Right ventricle myocardium superior (tissue), 1 donor: ENCODE measurements at regions of chr5 and their contacts with region 1.

Region 1: GRCh38 chr5:147509710-147510651 is at the start of gene DPYSL3:
- DNase-seq: peak; percentile 84
- ATAC-seq: peak; percentile 98
- total RNA-seq, gene DPYSL3: 20.5 TPM

Region 2: DNA sequence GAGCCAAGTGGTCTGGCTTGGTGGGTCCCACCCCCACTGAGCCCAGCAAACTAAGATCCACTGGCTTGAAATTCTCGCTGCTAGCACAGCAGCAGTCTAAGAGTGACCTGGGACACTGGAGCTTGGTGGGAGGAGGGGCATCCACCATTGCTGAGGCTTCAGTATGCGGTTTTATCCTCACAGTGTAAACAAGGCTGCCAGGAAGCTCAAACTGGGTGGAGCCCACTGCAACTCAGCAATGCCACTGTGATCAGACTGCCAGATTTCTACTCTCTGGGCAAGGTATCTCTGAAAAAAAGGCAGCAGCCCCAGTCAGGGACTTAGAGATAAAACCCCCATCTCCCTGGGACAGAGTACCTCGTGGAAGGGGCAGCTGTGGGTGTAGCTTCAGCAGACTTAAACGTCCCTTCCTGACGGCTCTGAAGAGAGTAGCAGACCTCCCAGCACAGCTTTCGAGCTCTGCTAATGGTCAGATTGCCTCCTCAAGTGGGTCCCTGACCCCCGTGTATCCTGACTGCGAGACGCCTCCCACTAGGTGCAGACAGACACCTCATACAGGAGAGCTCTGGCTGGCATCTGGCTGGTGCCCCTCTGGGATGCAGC is 293.3 kb before region 1 on chr5:
- intact Hi-C with region 1: no loop called
- DNase-seq: no peak
- ATAC-seq: no peak

Region 3: GRCh38 chr5:147558826-147559225 is 48.8 kb after region 1 on chr5:
- intact Hi-C with region 1: loop called (anchors 10 kb)
- DNase-seq: peak; percentile 62
- ATAC-seq: peak; percentile 74